ENCODE measurements at regions of chr3 and their contacts with region 1.

Region 1: DNA sequence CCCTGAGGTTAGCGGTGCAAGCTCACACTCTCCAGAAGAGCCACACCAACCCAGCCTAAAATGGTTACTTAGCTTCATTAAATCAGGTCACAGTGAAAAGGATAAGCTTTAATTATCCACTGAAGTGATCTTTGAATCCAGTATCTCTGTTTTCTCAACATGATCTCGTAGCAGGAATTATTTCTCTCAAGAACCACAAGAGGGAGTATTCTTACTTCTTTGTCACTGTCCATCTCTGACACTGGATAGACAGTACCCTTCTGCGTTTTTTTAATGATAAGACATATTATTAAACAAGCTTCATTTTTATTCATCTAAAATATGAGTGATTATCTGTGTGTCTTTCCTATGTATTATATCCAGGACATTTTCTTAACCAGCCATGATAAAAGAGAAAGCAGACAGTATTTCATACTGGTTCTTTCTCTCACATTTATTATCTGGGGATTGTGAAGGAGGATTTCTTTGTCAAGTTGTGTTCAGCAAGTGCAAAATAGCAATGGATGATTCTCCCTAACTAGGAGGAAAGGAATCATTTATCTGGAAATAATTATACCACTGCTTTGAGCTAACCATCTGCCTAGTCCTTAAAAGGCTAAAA is 105.4 kb upstream of the CCDC54 start:
- DNase-seq: no peak
- ATAC-seq: peak in 3 of 4 donors; percentile 42 to 73 (median 53)
- H3K4me3 ChIP-seq: no peak overlapping the region
- H3K27ac ChIP-seq: no peak overlapping the region
- H3K4me1 ChIP-seq: peaks cover 0 to 3% (median 0%) of the 10 kb centered on the region in 12 donors
- H3K27me3 ChIP-seq: no peaks in the 10 kb centered on the region
- CTCF ChIP-seq: peak; percentile 50 to 76 (median 62)
- POLR2A ChIP-seq: no peak

Region 2: DNA sequence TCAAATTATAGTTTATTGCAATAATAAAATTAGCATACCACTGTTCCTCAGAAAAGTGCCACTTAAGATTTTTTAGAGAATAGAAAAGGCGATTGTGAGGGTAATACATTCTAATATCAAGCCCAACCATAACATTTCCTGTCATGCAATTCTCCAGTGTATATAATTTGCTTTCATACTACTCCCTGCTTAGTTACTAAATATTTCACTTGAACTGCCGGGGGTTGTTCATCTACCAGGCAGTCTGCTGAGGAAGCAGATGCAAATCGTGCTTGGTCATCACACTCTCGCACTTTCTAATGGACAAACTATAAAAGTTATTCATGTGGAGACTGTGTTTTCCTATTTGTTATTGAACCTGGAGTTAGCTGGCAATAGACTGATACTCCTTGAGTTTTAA is 757.5 kb before region 1 on chr3:
- intact Hi-C with region 1: no loop called
- DNase-seq: no peak
- ATAC-seq: no peak
- H3K4me3 ChIP-seq: no peak overlapping the region
- H3K27ac ChIP-seq: no peak overlapping the region
- H3K4me1 ChIP-seq: no peaks in the 10 kb centered on the region
- H3K27me3 ChIP-seq: no peaks in the 10 kb centered on the region
- CTCF ChIP-seq: no peak
- POLR2A ChIP-seq: no peak

Region 3: GRCh38 chr3:107356706-107357105 is 84.8 kb after region 1 on chr3:
- intact Hi-C with region 1: loop called in 1 of 10 experiments (anchors 10 kb)
- DNase-seq: no peak
- ATAC-seq: no peak
- H3K4me3 ChIP-seq: no peak overlapping the region
- H3K27ac ChIP-seq: no peak overlapping the region
- H3K4me1 ChIP-seq: no peaks in the 10 kb centered on the region
- H3K27me3 ChIP-seq: no peaks in the 10 kb centered on the region
- CTCF ChIP-seq: no peak
- POLR2A ChIP-seq: no peak

Region 4: DNA sequence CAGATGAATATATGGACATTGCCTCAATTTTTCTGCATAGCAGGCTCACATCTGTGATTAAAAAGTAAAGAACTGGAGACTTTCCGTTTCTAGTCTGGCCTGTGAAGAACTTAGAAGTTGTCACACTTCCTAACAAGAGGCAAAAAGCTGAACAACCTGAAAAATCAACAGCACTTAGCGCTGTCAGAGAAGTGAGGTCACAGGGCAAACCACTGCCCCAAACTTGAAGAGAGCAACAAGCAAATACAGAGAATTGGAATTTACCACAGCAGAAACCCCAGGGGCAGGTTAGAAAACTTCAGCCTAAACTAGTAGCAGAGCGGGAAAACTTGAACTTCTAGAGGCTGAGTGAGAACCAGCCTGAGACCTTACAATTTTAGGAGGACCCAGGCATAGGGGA is 144.3 kb after region 1 on chr3:
- intact Hi-C with region 1: loop called in 7 of 10 experiments (anchors 2 to 10 kb)
- DNase-seq: no peak
- ATAC-seq: no peak
- H3K4me3 ChIP-seq: no peak overlapping the region
- H3K27ac ChIP-seq: no peak overlapping the region
- H3K4me1 ChIP-seq: peaks cover 0 to 7% (median 0%) of the 10 kb centered on the region in 12 donors
- H3K27me3 ChIP-seq: no peaks in the 10 kb centered on the region
- CTCF ChIP-seq: no peak
- POLR2A ChIP-seq: no peak

Region 5: GRCh38 chr3:107421170-107421792 is 149.4 kb after region 1 on chr3:
- intact Hi-C with region 1: loop called (anchors 2 to 10 kb)
- DNase-seq: peak in 1 of 5 donors; percentile 13
- ATAC-seq: peak; percentile 65 to 89 (median 75)
- H3K4me3 ChIP-seq: peak overlapping the region in 10 of 12 donors; percentile 17 to 60 (median 48)
- H3K27ac ChIP-seq: peak overlapping the region in 3 of 12 donors; percentile 10 to 36 (median 22)
- H3K4me1 ChIP-seq: peaks cover 0 to 7% (median 0%) of the 10 kb centered on the region in 12 donors
- H3K27me3 ChIP-seq: no peaks in the 10 kb centered on the region
- CTCF ChIP-seq: peak; percentile 59 to 83 (median 72)
- POLR2A ChIP-seq: no peak

Region 6: GRCh38 chr3:107429320-107430181 is 157.7 kb after region 1 on chr3:
- intact Hi-C with region 1: loop called in 6 of 10 experiments (anchors 2 to 10 kb)
- DNase-seq: peak; percentile 80 to 86 (median 81)
- ATAC-seq: peak; percentile 81 to 89 (median 87)
- H3K4me3 ChIP-seq: peak overlapping the region; percentile 15 to 94 (median 78)
- H3K27ac ChIP-seq: peak overlapping the region; percentile 58 to 99 (median 96)
- H3K4me1 ChIP-seq: peaks cover 0 to 27% (median 7%) of the 10 kb centered on the region in 12 donors
- H3K27me3 ChIP-seq: no peaks in the 10 kb centered on the region
- CTCF ChIP-seq: peak; percentile 81 to 92 (median 88)
- POLR2A ChIP-seq: peak in 1 of 2 donors; percentile 25

Region 7: GRCh38 chr3:107522510-107523288 is 250.8 kb after region 1 on chr3 and contains the start of gene BBX:
- intact Hi-C with region 1: loop called in 4 of 10 experiments (anchors 10 kb)
- DNase-seq: peak; percentile 91 to 95 (median 92)
- ATAC-seq: peak; percentile 97 to 99 (median 98)
- H3K4me3 ChIP-seq: peak within 1 kb of the TSS; percentile 75 to 97 (median 88)
- H3K27ac ChIP-seq: peak within 1 kb of the TSS; percentile 77 to 96 (median 92)
- H3K4me1 ChIP-seq: peaks cover 0 to 20% (median 10%) of the 10 kb centered on the region in 12 donors
- H3K27me3 ChIP-seq: no peaks in the 10 kb centered on the region
- CTCF ChIP-seq: peak in 3 of 12 donors; percentile 8 to 11 (median 8)
- POLR2A ChIP-seq: peak; percentile 31 to 89
- total RNA-seq, gene BBX: 34.0 to 60.5 (median 48.0) TPM

Region 8: DNA sequence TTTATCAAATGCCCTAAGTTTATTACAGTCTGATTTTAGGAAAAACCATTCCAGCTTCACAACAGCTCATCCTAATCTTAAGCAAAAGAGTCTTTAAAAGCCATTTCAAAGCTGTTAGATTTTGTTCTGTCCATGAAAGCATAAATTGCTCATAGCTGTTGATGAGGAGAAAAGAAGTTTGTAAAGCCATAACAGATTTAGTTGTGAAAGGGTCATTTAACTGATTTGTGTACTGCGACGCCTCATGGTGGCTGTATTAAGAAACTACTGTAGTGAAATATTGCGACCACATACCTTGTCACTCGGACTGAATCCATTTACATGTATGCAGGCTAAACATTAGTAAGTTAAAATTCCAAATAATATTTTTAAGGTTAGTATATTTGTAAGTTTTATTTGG is 271.8 kb after region 1 on chr3:
- intact Hi-C with region 1: loop called in 1 of 10 experiments (anchors 10 kb)
- DNase-seq: no peak
- ATAC-seq: no peak
- H3K4me3 ChIP-seq: no peak overlapping the region
- H3K27ac ChIP-seq: no peak overlapping the region
- H3K4me1 ChIP-seq: peaks cover 0 to 9% (median 0%) of the 10 kb centered on the region in 12 donors
- H3K27me3 ChIP-seq: no peaks in the 10 kb centered on the region
- CTCF ChIP-seq: peak in 8 of 12 donors; percentile 16 to 45 (median 32)
- POLR2A ChIP-seq: no peak